ENCODE measurements at regions of chr1 and their contacts with region 1.

Region 1: GRCh38 chr1:234499119-234499942 is 20.4 kb upstream of the TARBP1 start:
- DNase-seq: peak; percentile 87 to 97 (median 92)
- H3K4me3 ChIP-seq: no peak overlapping the region
- H3K27ac ChIP-seq: peak overlapping the region in 4 of 5 donors; percentile 34 to 90 (median 76)
- H3K4me1 ChIP-seq: peaks cover 10 to 19% of the 10 kb centered on the region in 2 donors
- H3K27me3 ChIP-seq: no peaks in the 10 kb centered on the region
- CTCF ChIP-seq: peak; percentile 76 to 99 (median 97)
- POLR2A ChIP-seq: peak in 1 of 2 donors; percentile 8

Region 2: DNA sequence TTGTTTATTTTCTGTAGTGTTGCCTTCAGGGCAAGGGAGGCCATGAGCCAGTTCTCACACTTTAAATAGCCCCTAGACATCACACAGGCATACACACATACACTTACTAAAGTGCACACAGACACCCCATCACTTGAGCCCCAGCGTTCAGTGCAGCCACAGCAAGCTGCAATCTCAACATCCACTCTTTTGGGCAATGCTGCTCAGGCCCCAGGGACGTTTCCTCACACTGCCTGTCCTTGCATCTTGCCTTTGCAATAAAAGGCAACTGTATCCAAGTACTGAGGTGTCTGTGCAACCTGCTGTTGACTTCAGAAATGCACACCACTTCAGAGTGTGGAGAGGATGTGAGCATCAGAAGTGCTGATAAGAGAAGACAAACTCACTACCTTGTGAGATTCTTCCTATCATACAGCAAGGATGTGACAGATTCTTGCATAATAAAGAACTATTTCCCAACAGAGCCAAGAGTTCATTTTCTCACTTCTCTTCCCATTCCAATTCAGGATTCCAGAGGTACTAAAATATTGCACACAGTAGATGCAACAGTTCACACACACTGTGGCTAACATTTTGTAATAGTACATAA is 74.5 kb after region 1 on chr1:
- intact Hi-C with region 1: no loop called
- DNase-seq: no peak
- H3K4me3 ChIP-seq: no peak overlapping the region
- H3K27ac ChIP-seq: peak overlapping the region in 2 of 5 donors; percentile 7 to 25
- H3K4me1 ChIP-seq: no peaks in the 10 kb centered on the region
- H3K27me3 ChIP-seq: no peaks in the 10 kb centered on the region
- CTCF ChIP-seq: no peak
- POLR2A ChIP-seq: no peak

Region 3: DNA sequence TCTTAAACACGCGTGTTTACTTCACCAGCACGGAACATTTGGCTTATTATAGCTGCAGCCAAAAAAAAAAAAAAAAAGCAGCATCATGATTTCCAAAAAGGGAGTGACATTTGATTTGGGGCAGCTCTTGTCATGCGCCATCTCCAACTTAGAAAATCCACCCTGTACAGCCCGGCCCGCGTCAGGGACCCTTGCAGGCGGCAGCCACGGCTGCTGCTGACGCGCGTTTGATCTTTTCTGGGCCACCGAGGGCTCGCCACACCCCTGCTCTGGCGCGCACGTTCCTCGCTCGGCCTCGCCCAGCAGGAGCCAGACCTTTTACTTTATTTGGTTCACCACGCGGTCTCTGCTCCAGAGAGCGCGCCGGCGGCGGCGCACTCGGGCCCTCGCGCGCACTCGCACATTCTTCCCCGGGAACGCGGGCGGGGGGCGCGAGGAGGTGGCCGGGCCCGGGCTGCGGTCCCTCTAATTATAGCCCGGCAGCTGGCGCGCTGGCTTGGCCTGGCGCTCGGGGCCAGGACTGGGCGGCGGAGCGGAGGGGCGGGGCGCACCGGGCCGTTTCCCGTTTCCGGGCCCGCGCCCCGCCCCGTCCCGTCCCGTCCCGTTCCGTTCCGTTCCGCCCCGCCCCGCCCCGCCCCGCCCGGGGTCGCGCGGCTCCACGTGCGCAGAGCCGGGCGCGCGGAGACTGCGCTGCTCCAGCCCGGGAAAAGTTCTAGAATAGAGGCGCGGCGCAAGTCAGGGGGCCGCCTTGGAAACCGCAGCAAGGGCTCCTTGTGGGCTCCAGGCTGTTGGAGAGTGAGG is 100.5 kb after region 1 on chr1:
- intact Hi-C with region 1: loop called (anchors 10 kb)
- DNase-seq: peak; percentile 80 to 91 (median 87)
- H3K4me3 ChIP-seq: peak overlapping the region in 3 of 4 donors; percentile 19 to 61 (median 31)
- H3K27ac ChIP-seq: peak overlapping the region; percentile 97 to 100 (median 100)
- H3K4me1 ChIP-seq: peaks cover 49 to 55% of the 10 kb centered on the region in 2 donors
- H3K27me3 ChIP-seq: no peaks in the 10 kb centered on the region
- CTCF ChIP-seq: peak in 2 of 6 experiments; percentile 2 to 5
- POLR2A ChIP-seq: peak; percentile 45 to 85

Region 4: DNA sequence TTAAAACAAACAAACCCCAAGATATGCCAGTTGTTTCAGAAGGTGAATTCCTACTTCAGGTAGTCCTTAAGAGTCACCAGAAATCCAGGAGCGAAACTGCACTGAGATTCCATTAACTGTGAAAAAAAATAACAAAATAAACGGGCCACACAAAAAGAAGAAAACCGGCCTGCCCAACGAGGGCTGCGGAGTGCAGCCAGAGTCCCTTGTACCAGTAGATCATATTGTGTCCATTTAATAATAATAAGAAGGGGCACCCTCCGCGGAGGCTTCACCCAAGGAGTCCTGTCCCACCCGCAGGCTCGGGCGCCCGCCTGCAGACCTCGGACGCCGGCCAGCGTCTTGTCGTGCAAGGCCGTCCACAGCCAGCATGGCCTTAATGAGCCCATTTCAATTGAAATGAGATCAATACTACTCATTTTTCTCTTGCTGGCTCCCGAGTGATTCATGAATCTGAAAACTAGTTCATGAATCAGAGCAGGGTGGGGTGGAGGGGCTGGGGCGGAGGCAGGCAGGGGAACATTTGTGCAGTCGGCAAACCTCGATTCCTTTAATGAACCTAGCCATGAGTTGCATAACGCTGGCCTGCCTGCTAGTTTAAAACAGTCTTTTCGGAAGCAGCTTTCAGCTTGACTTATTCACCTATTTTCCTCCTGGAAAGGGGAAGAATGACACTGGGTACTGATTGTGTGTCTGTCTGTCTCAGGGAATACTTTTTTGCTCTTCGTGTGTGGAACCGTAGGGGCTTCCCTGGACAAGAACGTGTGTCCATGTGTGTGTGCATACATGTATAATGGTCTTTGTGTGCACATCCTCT is 223.8 kb after region 1 on chr1:
- intact Hi-C with region 1: loop called (anchors 10 kb)
- DNase-seq: peak; percentile 77 to 92 (median 88)
- H3K4me3 ChIP-seq: peak overlapping the region in 1 of 4 donors; percentile 4
- H3K27ac ChIP-seq: peak overlapping the region; percentile 93 to 98 (median 97)
- H3K4me1 ChIP-seq: peaks cover 73 to 92% of the 10 kb centered on the region in 2 donors
- H3K27me3 ChIP-seq: no peaks in the 10 kb centered on the region
- CTCF ChIP-seq: peak in 1 of 6 experiments; percentile 11
- POLR2A ChIP-seq: peak in 1 of 2 donors; percentile 67

Region 5: DNA sequence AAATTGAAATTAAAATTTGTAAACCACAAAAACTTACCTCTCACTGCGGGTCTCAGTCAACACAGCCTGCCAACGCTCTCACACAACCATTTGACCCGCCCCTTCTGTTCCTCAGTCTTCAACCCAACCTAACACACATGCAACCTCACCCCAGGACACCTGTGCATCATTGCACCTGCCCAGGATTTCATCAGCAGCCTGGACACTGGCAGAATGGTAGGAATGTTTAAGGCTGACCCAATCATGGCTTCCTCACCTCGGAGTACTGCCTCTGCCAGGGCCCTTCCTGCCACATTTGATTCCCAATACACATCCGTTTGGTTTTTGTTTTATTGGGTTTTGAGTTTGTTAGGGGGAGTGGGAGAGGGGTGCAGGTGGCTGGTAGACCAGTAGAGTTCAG is 588.6 kb after region 1 on chr1:
- intact Hi-C with region 1: loop called (anchors 5 kb)
- DNase-seq: no peak
- H3K4me3 ChIP-seq: no peak overlapping the region
- H3K27ac ChIP-seq: no peak overlapping the region
- H3K4me1 ChIP-seq: peaks cover 12 to 13% of the 10 kb centered on the region in 2 donors
- H3K27me3 ChIP-seq: no peaks in the 10 kb centered on the region
- CTCF ChIP-seq: no peak
- POLR2A ChIP-seq: no peak

Region 6: GRCh38 chr1:235093696-235094592 is 594.6 kb after region 1 on chr1:
- intact Hi-C with region 1: loop called (anchors 5 kb)
- DNase-seq: peak; percentile 59 to 93 (median 80)
- H3K4me3 ChIP-seq: peak overlapping the region in 1 of 4 donors; percentile 7
- H3K27ac ChIP-seq: peak overlapping the region in 2 of 5 donors; percentile 8 to 10
- H3K4me1 ChIP-seq: peaks cover 0 to 10% of the 10 kb centered on the region in 2 donors
- H3K27me3 ChIP-seq: no peaks in the 10 kb centered on the region
- CTCF ChIP-seq: peak; percentile 75 to 90 (median 80)
- POLR2A ChIP-seq: no peak

Measured in adrenal gland (tissue), 19 donors.